Mammary epithelial cell (primary cell): ENCODE measurements at regions of chr9 and their contacts with region 1.

Region 1: GRCh38 chr9:27125030-27125429 is 16.0 kb downstream of the TEK start:
- DNase-seq: peak; percentile 96
- H3K4me3 ChIP-seq: no peak overlapping the region
- H3K27ac ChIP-seq: peak overlapping the region; percentile 85
- H3K4me1 ChIP-seq: peaks cover 25% of the 10 kb centered on the region
- H3K27me3 ChIP-seq: no peaks in the 10 kb centered on the region
- CTCF ChIP-seq: no peak

Region 2: GRCh38 chr9:26936300-26936948 is 188.6 kb before region 1 on chr9:
- CTCF ChIA-PET with region 1: no interaction called
- dilution Hi-C with region 1: no loop called
- in situ Hi-C with region 1: no loop called
- intact Hi-C with region 1: no loop called
- DNase-seq: no peak
- H3K4me3 ChIP-seq: no peak overlapping the region
- H3K27ac ChIP-seq: no peak overlapping the region
- H3K4me1 ChIP-seq: no peaks in the 10 kb centered on the region
- H3K27me3 ChIP-seq: no peaks in the 10 kb centered on the region
- CTCF ChIP-seq: no peak

Region 3: DNA sequence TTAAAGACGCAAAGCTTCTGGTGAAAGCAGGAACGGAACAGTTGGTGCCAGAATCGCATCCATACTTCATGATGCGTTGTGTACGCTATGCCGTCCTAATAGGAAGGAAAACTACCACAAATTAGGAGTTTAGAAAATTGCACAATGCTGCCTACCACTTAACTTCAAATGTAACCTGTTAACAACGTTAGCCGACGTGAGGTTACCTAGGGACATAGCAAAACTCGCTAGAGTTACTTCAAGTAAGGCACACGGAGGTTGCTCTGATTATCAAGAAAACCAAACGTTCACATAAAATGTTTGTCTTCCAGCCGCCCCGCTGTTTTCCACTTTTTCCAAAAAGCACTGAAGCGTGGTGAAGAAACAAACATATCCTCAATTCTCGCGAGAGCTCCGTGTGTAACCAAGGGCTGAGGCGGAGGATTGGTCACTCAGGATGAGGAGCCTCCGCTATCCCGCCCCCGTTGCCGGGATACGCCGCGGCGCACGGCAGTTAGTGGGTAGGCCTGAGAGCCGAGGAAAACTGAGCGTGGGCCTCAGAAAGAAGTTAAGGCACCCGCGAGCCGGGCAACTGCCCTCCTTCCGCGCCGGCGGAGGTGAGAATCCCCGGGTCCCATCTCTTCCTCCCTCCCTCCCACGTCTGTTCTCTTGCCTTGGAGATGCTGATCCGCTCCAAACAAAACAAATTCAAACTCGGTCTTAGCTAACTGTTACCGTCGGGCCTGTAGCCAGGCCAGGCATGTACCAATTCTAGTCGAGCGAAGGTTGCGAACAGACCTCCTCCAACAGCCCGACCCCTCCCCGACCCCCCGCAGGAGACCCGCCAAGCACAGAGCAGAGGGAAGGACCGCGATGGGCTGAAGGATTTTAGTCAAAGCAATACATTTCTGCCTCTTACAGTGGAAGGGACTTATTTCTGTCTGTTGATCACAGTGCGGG is 168.8 kb before region 1 on chr9 and contains the start of gene IFT74:
- CTCF ChIA-PET with region 1: no interaction called
- dilution Hi-C with region 1: no loop called
- in situ Hi-C with region 1: no loop called
- intact Hi-C with region 1: loop called (anchors 10 kb)
- DNase-seq: peak; percentile 96
- H3K4me3 ChIP-seq: peak within 1 kb of the TSS; percentile 64 to 78 (median 69)
- H3K27ac ChIP-seq: peak within 1 kb of the TSS; percentile 88
- H3K4me1 ChIP-seq: peaks cover 4% of the 10 kb centered on the region
- H3K27me3 ChIP-seq: no peaks in the 10 kb centered on the region
- CTCF ChIP-seq: no peak
- total RNA-seq, gene IFT74: 12.3 to 19.2 TPM

Region 4: GRCh38 chr9:27043176-27043575 is 81.9 kb before region 1 on chr9:
- CTCF ChIA-PET with region 1: no interaction called
- dilution Hi-C with region 1: no loop called
- in situ Hi-C with region 1: no loop called
- intact Hi-C with region 1: loop called (anchors 5 kb)
- DNase-seq: no peak
- H3K4me3 ChIP-seq: no peak overlapping the region
- H3K27ac ChIP-seq: no peak overlapping the region
- H3K4me1 ChIP-seq: no peaks in the 10 kb centered on the region
- H3K27me3 ChIP-seq: no peaks in the 10 kb centered on the region
- CTCF ChIP-seq: no peak

Region 5: GRCh38 chr9:27151693-27152402 is 26.8 kb after region 1 on chr9:
- CTCF ChIA-PET with region 1: no interaction called
- dilution Hi-C with region 1: no loop called
- in situ Hi-C with region 1: no loop called
- intact Hi-C with region 1: loop called (anchors 2 kb)
- DNase-seq: peak; percentile 30
- H3K4me3 ChIP-seq: no peak overlapping the region
- H3K27ac ChIP-seq: no peak overlapping the region
- H3K4me1 ChIP-seq: peaks cover 28% of the 10 kb centered on the region
- H3K27me3 ChIP-seq: no peaks in the 10 kb centered on the region
- CTCF ChIP-seq: no peak

Region 6: GRCh38 chr9:27184556-27185351 is 59.7 kb after region 1 on chr9:
- CTCF ChIA-PET with region 1: no interaction called
- dilution Hi-C with region 1: no loop called
- in situ Hi-C with region 1: no loop called
- intact Hi-C with region 1: loop called (anchors 2 kb)
- DNase-seq: no peak
- H3K4me3 ChIP-seq: no peak overlapping the region
- H3K27ac ChIP-seq: no peak overlapping the region
- H3K4me1 ChIP-seq: peaks cover 29% of the 10 kb centered on the region
- H3K27me3 ChIP-seq: no peaks in the 10 kb centered on the region
- CTCF ChIP-seq: no peak